ENCODE measurements at regions of chr1 and their contacts with region 1.

Region 1: DNA sequence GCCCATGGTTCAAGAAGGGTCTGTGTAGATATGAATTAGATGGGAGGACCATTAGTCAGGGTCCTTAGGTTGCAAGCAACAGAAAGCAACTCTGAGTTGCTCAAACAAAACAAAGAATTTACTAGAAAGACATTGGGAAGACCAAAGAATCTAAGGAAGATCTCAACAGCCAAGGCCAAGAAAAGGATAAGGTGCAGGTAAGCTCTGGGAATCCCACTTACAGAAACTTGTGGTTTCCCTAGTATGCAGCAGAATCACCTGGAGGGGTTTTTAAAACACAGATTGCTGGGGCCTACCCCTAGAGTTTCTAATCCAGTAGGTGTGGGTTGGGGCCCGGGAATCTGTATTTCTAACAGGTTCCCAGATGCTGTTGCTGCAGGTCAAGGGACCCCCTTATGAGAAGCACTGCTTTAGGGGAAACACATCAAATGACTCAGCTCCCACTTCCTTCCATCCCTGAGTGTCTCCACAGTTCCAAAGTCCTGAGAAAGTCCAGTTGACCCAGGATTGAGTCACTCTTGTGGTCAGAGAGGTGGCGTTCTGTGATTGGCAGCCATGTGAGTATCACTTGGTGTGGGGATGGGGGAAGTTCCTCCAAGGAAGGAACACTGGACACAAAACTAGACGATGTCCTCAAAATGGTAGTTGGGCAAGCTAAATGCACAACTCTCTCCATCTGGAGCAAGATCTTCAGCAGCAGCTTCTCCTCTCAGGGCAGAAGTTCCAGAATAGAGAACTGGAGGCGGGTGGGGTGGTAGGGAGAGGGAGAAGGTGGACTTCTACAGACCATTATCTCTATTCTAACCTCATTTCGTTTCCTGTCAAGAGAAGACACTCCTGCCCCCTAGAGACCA is 24.2 kb upstream of the EYA3 start:
- DNase-seq: no peak
- ATAC-seq: peak; percentile 43; the same call in 1 of the 3 replicates
- H3K4me3 ChIP-seq: no peak overlapping the region
- H3K27ac ChIP-seq: no peak overlapping the region
- H3K4me1 ChIP-seq: peaks cover 39% of the 10 kb centered on the region
- H3K27me3 ChIP-seq: no peaks in the 10 kb centered on the region
- CTCF ChIP-seq: peak in 1 of 3 experiments; percentile 48; a peak in 1 of 6 replicates
- EP300 ChIP-seq: no peak
- POLR2A ChIP-seq: no peak
- RAD21 ChIP-seq: peak; percentile 60

Region 2: GRCh38 chr1:28139025-28139712 is 26.6 kb after region 1 on chr1:
- CTCF ChIA-PET with region 1: interaction called, 37 read pairs
- POLR2A ChIA-PET with region 1: interaction called, 9 read pairs
- RAD21 ChIA-PET with region 1: interaction called, 8 read pairs
- SMC1A ChIA-PET with region 1: interaction called, 29 read pairs
- in situ Hi-C with region 1: no loop called
- intact Hi-C with region 1: loop called (anchors 2 kb)
- DNase-seq: no peak
- ATAC-seq: peak; percentile 47
- H3K4me3 ChIP-seq: no peak overlapping the region
- H3K27ac ChIP-seq: no peak overlapping the region
- H3K4me1 ChIP-seq: peaks cover 44% of the 10 kb centered on the region
- H3K27me3 ChIP-seq: no peaks in the 10 kb centered on the region
- CTCF ChIP-seq: no peak
- EP300 ChIP-seq: no peak
- POLR2A ChIP-seq: no peak
- RAD21 ChIP-seq: no peak

Region 3: GRCh38 chr1:28199328-28200233 is 87.0 kb after region 1 on chr1:
- CTCF ChIA-PET with region 1: interaction called, 3 read pairs
- POLR2A ChIA-PET with region 1: interaction called, 5 read pairs
- RAD21 ChIA-PET with region 1: interaction called, 8 read pairs
- SMC1A ChIA-PET with region 1: interaction called, 10 read pairs
- in situ Hi-C with region 1: no loop called
- intact Hi-C with region 1: no loop called
- DNase-seq: peak; percentile 99
- ATAC-seq: peak; percentile 91
- H3K4me3 ChIP-seq: peak overlapping the region; percentile 57; the same call in 1 of the 2 replicates
- H3K27ac ChIP-seq: peak overlapping the region; percentile 83
- H3K4me1 ChIP-seq: peaks cover 44% of the 10 kb centered on the region
- H3K27me3 ChIP-seq: no peaks in the 10 kb centered on the region
- CTCF ChIP-seq: no peak
- EP300 ChIP-seq: peak; percentile 85 to 98
- POLR2A ChIP-seq: peak; percentile 58; the same call in 1 of the 2 replicates
- RAD21 ChIP-seq: peak; percentile 29; the same call in 1 of the 2 replicates

Region 4: DNA sequence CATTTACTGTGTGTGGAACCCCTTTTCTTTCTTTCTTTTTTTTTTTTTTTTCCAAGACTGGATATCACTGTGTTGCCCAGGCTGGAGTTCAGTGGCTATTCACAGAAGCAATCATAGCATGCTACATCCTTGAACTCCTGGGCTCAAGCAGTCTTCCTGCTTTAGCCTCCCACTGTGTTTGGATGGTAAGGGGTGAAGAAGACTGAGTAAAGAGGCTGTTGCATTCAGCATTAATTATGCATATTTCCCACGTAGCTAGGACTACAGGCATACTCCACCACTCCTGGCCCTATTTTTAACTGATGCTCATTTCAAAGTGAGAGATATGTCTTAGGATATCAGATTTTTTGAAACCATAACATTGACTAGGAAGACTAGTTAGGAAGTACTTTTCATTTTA is 296.5 kb after region 1 on chr1:
- CTCF ChIA-PET with region 1: no interaction called
- POLR2A ChIA-PET with region 1: no interaction called
- RAD21 ChIA-PET with region 1: no interaction called
- SMC1A ChIA-PET with region 1: no interaction called
- in situ Hi-C with region 1: no loop called
- intact Hi-C with region 1: no loop called
- DNase-seq: no peak
- ATAC-seq: no peak
- H3K4me3 ChIP-seq: no peak overlapping the region
- H3K27ac ChIP-seq: no peak overlapping the region
- H3K4me1 ChIP-seq: no peaks in the 10 kb centered on the region
- H3K27me3 ChIP-seq: no peaks in the 10 kb centered on the region
- CTCF ChIP-seq: no peak
- EP300 ChIP-seq: no peak
- POLR2A ChIP-seq: no peak
- RAD21 ChIP-seq: no peak

Measured in GM12878 (cell line).